ENCODE measurements at regions of chr17 and their contacts with region 1.

Region 1: DNA sequence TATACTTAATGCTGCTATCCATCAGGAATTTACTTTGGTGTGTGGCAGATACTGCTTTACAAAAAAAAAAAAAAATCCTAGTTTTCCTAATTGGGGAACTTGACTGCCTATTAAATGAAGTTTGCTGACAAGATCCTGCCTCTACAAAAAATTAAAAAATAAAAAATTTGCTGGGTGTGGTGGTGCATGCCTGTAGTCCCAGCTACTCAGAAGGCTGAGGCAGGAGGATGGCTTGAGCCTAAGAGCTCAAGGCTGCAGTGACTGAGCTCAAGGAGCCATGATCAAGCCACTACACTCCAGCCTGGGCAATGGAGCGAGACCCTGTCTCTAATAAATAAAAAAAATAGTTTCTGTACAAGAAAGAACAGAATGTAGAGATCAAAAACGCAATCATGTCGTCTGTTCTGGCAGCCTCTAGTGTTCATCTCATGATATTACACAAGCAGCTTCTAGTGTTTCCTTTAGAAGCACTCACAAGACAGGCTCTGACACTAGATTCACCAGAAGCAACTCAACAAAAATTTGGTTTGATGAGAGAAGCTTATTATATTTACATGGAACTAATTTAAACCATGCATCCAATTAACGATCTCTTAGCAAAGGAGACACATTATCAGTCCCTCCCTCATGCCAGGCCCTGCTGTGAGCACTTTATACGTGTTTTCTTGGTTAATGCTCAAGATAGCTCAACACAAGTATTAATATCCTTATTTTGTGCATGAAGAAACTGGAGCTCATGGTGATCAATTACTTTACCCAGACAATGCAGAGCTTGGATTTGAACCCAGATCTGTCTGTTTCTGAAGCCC is 6.8 kb upstream of the KRTAP17-1 start:
- DNase-seq: peak; percentile 49
- H3K4me3 ChIP-seq: no peak overlapping the region
- H3K27ac ChIP-seq: no peak overlapping the region
- H3K4me1 ChIP-seq: no peaks in the 10 kb centered on the region
- H3K27me3 ChIP-seq: peaks cover 0 to 2% of the 10 kb centered on the region in 2 experiments
- CTCF ChIP-seq: peak; percentile 40 to 69
- POLR2A ChIP-seq: no peak

Region 2: DNA sequence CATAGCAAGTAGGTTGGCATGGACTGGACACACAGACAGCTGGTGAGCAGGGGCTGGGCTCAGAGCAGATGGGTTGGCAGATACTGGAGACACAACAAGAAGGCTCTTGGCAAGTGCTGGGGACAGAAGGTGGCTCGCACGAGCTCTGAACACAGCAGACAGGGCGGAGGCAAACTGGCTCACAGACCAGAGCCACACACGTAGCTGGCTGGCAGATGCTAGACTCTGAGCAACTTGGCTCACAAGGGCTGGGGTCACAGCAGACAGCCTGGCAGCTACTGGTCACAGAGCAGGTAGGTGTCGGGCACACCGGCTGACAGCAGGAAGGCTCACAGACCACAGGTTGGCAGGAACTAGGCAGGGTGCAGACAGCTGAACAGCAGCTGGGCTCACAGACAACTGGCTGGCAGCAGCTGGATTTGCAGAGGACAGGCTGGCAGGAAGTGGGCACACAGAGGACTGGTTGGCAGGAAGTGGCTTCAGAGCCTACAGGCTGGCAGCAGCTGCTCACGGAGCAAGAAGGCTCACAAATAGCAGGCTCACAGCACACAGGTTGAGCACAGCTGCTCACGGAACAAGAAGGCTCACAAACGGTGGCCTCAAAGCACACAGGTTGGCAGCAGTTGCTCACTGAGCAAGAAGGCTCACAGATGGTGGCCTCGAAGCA is 13.9 kb before region 1 on chr17:
- CTCF ChIA-PET with region 1: interaction called, 16 read pairs
- POLR2A ChIA-PET with region 1: no interaction called
- dilution Hi-C with region 1: no loop called
- intact Hi-C with region 1: no loop called
- DNase-seq: no peak
- H3K4me3 ChIP-seq: no peak overlapping the region
- H3K27ac ChIP-seq: no peak overlapping the region
- H3K4me1 ChIP-seq: no peaks in the 10 kb centered on the region
- H3K27me3 ChIP-seq: no peaks in the 10 kb centered on the region
- CTCF ChIP-seq: no peak
- POLR2A ChIP-seq: no peak

Measured in endothelial cell of umbilical vein (primary cell).